Naive thymus-derived CD4-positive, alpha-beta T cell (primary cell): ENCODE measurements at regions of chr17 and their contacts with region 1.

Region 1: GRCh38 chr17:39153599-39154051 is 2.2 kb upstream of the PLXDC1 start:
- DNase-seq: peak; percentile 87 to 96 (median 91)
- ATAC-seq: peak; percentile 74
- H3K4me3 ChIP-seq: peak overlapping the region; percentile 91
- H3K4me3 Mint-ChIP-seq: peak overlapping the region; percentile 93 to 100 (median 98)
- H3K27ac ChIP-seq: peak overlapping the region; percentile 61
- H3K27ac Mint-ChIP-seq: peak overlapping the region; percentile 92 to 100 (median 98)
- H3K4me1 ChIP-seq: peaks cover 10 to 26% of the 10 kb centered on the region in 2 donors
- H3K4me1 Mint-ChIP-seq: peaks cover 29 to 51% (median 38%) of the 10 kb centered on the region in 7 donors
- H3K27me3 ChIP-seq: no peaks in the 10 kb centered on the region
- H3K27me3 Mint-ChIP-seq: peaks cover 0 to 54% (median 4%) of the 10 kb centered on the region in 5 donors

Region 2: DNA sequence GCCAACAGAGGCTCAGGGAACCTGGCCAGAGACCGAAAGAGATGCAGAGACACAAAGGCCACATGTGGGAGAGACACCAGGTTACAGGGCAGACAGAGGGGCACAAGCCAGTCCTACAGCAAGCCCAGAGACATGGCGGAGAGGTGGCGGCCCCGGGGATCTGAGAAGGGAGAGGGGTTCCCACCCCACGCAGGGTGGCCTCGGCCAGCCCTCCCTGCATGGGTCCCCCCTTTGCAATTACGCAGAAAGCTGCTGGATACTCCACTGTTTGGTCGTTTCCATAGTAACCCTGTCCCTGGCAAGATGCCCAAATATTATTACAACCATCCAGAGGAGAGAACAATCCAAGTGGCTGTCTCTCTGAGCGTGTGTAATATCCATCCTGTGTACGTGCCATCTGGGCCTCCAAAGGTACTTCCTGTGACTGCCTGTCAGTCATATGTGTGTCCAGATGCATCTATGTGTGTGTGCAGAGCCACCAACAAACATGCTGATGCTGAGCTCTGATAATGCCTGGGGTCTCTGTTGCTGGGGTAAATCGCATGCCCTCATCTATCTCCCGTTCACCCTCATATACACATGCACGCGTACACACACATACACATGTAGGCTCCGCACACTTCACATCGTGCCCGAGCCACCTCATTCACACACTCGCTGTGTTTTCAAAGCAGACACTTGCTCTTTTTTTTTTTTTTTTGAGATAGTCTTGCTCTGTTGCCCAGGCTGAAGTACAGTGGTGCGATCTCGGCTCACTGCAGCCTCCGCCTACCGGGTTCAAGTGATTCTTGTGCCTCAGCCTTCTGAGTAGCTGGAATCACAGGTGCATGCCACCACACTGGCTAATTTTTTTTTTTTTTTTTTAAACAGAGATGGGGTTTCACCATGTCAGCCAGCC is 411.0 kb before region 1 on chr17:
- CTCF ChIA-PET with region 1: no interaction called
- POLR2A ChIA-PET with region 1: no interaction called
- intact Hi-C with region 1: no loop called
- DNase-seq: no peak
- ATAC-seq: no peak
- H3K4me3 ChIP-seq: no peak overlapping the region
- H3K4me3 Mint-ChIP-seq: peak overlapping the region in 1 of 10 donors; percentile 7
- H3K27ac ChIP-seq: no peak overlapping the region
- H3K27ac Mint-ChIP-seq: peak overlapping the region in 2 of 9 donors; percentile 5 to 73
- H3K4me1 ChIP-seq: peaks cover 0 to 11% of the 10 kb centered on the region in 2 donors
- H3K4me1 Mint-ChIP-seq: peaks cover 0 to 27% (median 12%) of the 10 kb centered on the region in 7 donors
- H3K27me3 ChIP-seq: peaks cover 0 to 10% of the 10 kb centered on the region in 2 donors
- H3K27me3 Mint-ChIP-seq: peaks cover 12 to 35% (median 17%) of the 10 kb centered on the region in 5 donors

Region 3: GRCh38 chr17:38799378-38800236 is 354.0 kb before region 1 on chr17 and contains the start of gene PIP4K2B:
- CTCF ChIA-PET with region 1: no interaction called
- POLR2A ChIA-PET with region 1: no interaction called
- intact Hi-C with region 1: loop called (anchors 1 kb)
- DNase-seq: peak; percentile 70 to 88 (median 78)
- ATAC-seq: peak; percentile 87
- H3K4me3 ChIP-seq: peak within 1 kb of the TSS; percentile 93
- H3K4me3 Mint-ChIP-seq: peak within 1 kb of the TSS; percentile 92 to 100 (median 96)
- H3K27ac ChIP-seq: peak within 1 kb of the TSS; percentile 81
- H3K27ac Mint-ChIP-seq: peak within 1 kb of the TSS; percentile 88 to 96 (median 92)
- H3K4me1 ChIP-seq: peaks cover 15 to 21% of the 10 kb centered on the region in 2 donors
- H3K4me1 Mint-ChIP-seq: peaks cover 31 to 48% (median 42%) of the 10 kb centered on the region in 7 donors
- H3K27me3 ChIP-seq: no peaks in the 10 kb centered on the region
- H3K27me3 Mint-ChIP-seq: no peaks in the 10 kb centered on the region
- total RNA-seq, gene PIP4K2B: 32.4 to 67.9 (median 49.1) TPM

Region 4: GRCh38 chr17:38922538-38923297 is 230.9 kb before region 1 on chr17:
- CTCF ChIA-PET with region 1: interaction called, 3 read pairs
- POLR2A ChIA-PET with region 1: interaction called, 7 read pairs
- intact Hi-C with region 1: loop called in 1 of 2 experiments (anchors 5 kb)
- DNase-seq: peak in 1 of 9 donors; percentile 17
- ATAC-seq: no peak
- H3K4me3 ChIP-seq: no peak overlapping the region
- H3K4me3 Mint-ChIP-seq: no peak overlapping the region
- H3K27ac ChIP-seq: no peak overlapping the region
- H3K27ac Mint-ChIP-seq: peak overlapping the region in 4 of 9 donors; percentile 38 to 93 (median 45)
- H3K4me1 ChIP-seq: peaks cover 12 to 14% of the 10 kb centered on the region in 2 donors
- H3K4me1 Mint-ChIP-seq: peaks cover 29 to 45% (median 31%) of the 10 kb centered on the region in 7 donors
- H3K27me3 ChIP-seq: no peaks in the 10 kb centered on the region
- H3K27me3 Mint-ChIP-seq: no peaks in the 10 kb centered on the region

Region 5: DNA sequence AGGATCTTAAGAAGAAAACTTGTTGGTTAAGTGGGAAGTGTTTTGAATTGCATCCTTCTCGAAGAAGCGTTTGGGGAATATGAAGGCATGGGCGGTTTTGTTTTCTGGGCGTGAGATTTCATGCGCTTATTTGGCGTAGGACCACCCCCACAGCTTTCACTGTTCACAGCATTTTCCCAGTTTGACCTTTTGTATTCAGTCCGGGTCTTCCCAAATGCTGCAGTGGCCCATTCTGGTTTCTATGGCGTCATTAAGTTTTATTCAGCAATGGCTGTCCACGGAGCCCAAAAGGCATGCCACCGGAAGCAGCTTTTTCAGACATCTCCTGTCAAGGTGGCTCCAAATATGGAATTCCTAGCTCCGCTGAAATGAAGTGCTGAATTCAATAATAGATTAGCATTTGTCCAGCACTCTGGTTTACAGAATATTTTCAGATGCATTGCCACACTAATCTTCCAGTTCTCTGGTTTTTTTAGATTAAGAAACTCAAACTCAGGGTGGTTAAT is 95.9 kb before region 1 on chr17:
- CTCF ChIA-PET with region 1: interaction called, 10 read pairs
- POLR2A ChIA-PET with region 1: interaction called, 29 read pairs
- intact Hi-C with region 1: loop called (anchors 1 to 2 kb)
- DNase-seq: no peak
- ATAC-seq: no peak
- H3K4me3 ChIP-seq: peak overlapping the region; percentile 65
- H3K4me3 Mint-ChIP-seq: peak overlapping the region; percentile 66 to 90 (median 84)
- H3K27ac ChIP-seq: no peak overlapping the region
- H3K27ac Mint-ChIP-seq: peak overlapping the region in 6 of 9 donors; percentile 25 to 87 (median 68)
- H3K4me1 ChIP-seq: no peaks in the 10 kb centered on the region
- H3K4me1 Mint-ChIP-seq: peaks cover 6 to 28% (median 17%) of the 10 kb centered on the region in 7 donors
- H3K27me3 ChIP-seq: no peaks in the 10 kb centered on the region
- H3K27me3 Mint-ChIP-seq: peaks cover 0 to 10% (median 0%) of the 10 kb centered on the region in 5 donors

Region 6: GRCh38 chr17:39164675-39165143 is 11.1 kb after region 1 on chr17:
- CTCF ChIA-PET with region 1: interaction called, 35 read pairs
- POLR2A ChIA-PET with region 1: interaction called, 17 read pairs
- intact Hi-C with region 1: loop called (anchors 1 kb)
- DNase-seq: peak; percentile 41 to 79 (median 72)
- ATAC-seq: peak; percentile 89
- H3K4me3 ChIP-seq: peak overlapping the region; percentile 81
- H3K4me3 Mint-ChIP-seq: peak overlapping the region; percentile 88 to 98 (median 92)
- H3K27ac ChIP-seq: peak overlapping the region; percentile 51
- H3K27ac Mint-ChIP-seq: peak overlapping the region in 6 of 9 donors; percentile 12 to 71 (median 56)
- H3K4me1 ChIP-seq: peaks cover 8 to 15% of the 10 kb centered on the region in 2 donors
- H3K4me1 Mint-ChIP-seq: peaks cover 22 to 34% (median 29%) of the 10 kb centered on the region in 7 donors
- H3K27me3 ChIP-seq: no peaks in the 10 kb centered on the region
- H3K27me3 Mint-ChIP-seq: peaks cover 0 to 42% (median 22%) of the 10 kb centered on the region in 5 donors

Region 7: GRCh38 chr17:39461113-39461925 is 307.7 kb after region 1 on chr17 and contains the start of gene CDK12:
- CTCF ChIA-PET with region 1: no interaction called
- POLR2A ChIA-PET with region 1: no interaction called
- intact Hi-C with region 1: loop called in 1 of 2 experiments (anchors 5 kb)
- DNase-seq: peak; percentile 76 to 98 (median 95)
- ATAC-seq: peak; percentile 91
- H3K4me3 ChIP-seq: peak within 1 kb of the TSS; percentile 73
- H3K4me3 Mint-ChIP-seq: peak within 1 kb of the TSS; percentile 93 to 100 (median 98)
- H3K27ac ChIP-seq: peak within 1 kb of the TSS; percentile 89
- H3K27ac Mint-ChIP-seq: peak within 1 kb of the TSS; percentile 89 to 99 (median 97)
- H3K4me1 ChIP-seq: peaks cover 8 to 13% of the 10 kb centered on the region in 2 donors
- H3K4me1 Mint-ChIP-seq: peaks cover 27 to 51% (median 41%) of the 10 kb centered on the region in 7 donors
- H3K27me3 ChIP-seq: no peaks in the 10 kb centered on the region
- H3K27me3 Mint-ChIP-seq: no peaks in the 10 kb centered on the region
- total RNA-seq, gene CDK12: 94.9 to 118 (median 112) TPM